ENCODE measurements at regions of chr19 and their contacts with region 1.

Region 1: DNA sequence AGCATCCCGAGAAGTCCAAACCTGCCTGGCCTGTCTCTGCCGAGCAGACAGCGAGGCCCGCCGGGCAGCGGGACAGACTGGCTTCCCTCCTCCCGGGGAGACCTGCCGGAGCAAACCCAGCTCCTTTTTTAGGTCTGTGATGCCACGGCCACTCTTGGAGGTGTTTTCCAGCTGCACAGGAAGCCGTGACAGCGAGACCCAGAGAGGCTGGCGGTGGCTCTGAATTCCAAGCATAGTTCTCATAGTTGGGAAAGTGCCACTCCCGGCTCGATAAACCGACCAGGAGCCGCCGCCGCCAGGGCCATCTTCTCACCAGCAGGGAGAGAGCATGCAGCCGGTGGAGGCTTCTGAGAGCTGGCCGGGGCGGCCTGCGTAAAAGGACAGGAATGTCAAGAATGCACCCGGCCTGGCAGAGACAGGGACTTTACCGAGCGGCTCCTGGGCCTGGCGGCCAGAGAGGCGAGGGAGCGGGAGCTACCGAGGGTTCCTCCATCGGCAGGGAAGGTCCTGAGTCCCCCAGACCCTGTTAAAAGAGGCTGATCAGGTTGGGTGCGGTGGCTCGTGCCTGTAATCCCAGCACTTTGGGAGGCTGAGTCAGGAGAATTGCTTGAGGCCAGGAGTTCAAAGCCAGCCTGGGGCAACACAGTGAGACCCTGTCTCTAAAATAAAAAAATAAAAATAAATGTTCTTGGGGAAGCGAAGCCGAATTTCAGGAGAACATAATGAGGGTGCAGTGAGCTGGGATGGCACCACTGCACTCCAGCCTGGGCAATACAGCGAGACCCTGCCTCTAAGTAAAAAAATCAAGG is 64.9 kb downstream of the GADD45B start:
- DNase-seq: peak; percentile 94

Region 2: GRCh38 chr19:2461751-2462634 is 78.9 kb before region 1 on chr19:
- intact Hi-C with region 1: no loop called
- DNase-seq: no peak

Region 3: DNA sequence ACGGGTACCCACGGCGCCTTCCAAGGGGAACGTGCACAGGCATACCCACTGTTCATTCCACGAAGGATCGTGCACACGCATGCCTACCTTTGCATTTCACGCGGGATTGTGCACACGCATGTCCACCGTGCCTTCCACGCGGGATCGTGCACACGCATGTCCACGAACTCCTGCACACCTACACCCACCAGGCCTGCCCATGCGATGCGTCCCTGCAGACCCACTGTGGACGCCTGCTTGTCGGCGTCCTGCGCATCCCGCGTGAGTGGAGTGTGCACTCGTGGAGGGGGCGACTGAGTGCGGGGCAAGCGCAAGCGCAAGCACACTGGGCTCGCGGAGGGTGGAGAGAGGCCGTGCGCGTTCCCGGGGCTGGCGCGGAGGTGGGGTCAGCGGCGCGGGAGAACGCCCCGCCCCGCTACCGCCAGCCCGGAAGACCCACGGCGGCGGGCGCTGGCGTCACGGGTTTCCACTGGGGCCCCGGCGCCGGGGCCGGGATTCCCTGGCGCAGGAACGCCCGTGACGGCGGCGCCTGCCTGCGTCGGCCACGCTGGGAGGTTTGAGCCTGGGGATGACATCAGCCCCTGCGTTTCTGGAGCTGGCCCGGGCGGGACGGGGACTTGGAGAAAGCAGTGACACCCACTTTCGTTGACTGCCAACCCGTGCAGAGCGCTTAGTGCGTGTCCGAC is 46.3 kb before region 1 on chr19:
- intact Hi-C with region 1: loop called (anchors 1 kb)
- DNase-seq: peak; percentile 90

Region 4: GRCh38 chr19:2663920-2664571 is 123.2 kb after region 1 on chr19:
- intact Hi-C with region 1: no loop called
- DNase-seq: peak; percentile 86

Measured in cardiac septum (tissue), 1 donor.